ENCODE measurements at regions of chr1 and their contacts with region 1.

Region 1: DNA sequence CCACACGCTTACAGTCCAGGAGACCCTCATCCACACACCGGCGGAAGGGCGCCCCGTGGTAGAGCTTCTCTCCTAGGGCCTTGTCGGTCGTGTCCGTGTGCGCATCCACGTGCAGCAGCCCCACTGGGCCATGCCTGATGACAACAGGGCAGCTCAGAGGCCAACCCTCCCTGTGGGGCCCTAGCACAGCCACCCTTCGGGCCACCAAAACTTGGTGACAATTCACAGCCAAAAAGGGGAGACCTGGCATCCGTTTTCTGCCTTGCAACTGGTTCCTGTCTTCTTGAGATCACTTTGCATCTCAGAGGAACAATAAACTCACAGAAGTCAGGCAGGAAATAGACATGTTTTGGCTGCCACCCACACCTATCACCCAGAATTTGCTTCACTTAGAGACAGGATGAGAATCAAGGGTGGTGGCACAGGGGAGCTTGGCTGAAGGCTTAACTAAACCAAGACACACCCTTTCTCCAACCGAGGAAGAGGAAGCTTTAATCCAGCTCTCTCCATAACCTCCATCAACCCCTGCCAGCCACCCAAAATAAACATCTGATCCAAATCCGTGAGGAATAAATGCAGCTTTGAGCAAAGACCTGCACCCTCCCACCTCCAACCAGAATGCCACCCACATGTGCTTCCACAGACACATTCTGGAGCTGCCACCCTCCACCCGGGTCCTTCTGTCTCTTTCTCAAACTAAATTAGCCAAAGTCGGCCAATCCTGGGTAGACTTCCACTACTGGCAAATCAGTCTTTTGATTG is 5.7 kb downstream of the AGMAT start:
- DNase-seq: peak; percentile 50
- ATAC-seq: peak; percentile 85
- H3K4me3 Mint-ChIP-seq: peak overlapping the region; percentile 66
- H3K27ac Mint-ChIP-seq: peak overlapping the region; percentile 98
- H3K4me1 Mint-ChIP-seq: peaks cover 32% of the 10 kb centered on the region
- H3K27me3 Mint-ChIP-seq: no peaks in the 10 kb centered on the region

Region 2: GRCh38 chr1:15526490-15527339 is 52.4 kb before region 1 on chr1 and contains the start of gene DNAJC16:
- POLR2A ChIA-PET with region 1: interaction called, 13 read pairs
- DNase-seq: peak; percentile 93
- ATAC-seq: peak; percentile 65
- H3K4me3 Mint-ChIP-seq: peak within 1 kb of the TSS; percentile 93
- H3K27ac Mint-ChIP-seq: peak within 1 kb of the TSS; percentile 100
- H3K4me1 Mint-ChIP-seq: peaks cover 38% of the 10 kb centered on the region
- H3K27me3 Mint-ChIP-seq: no peaks in the 10 kb centered on the region
- total RNA-seq, gene DNAJC16: 15.7 to 18.9 TPM

Region 3: DNA sequence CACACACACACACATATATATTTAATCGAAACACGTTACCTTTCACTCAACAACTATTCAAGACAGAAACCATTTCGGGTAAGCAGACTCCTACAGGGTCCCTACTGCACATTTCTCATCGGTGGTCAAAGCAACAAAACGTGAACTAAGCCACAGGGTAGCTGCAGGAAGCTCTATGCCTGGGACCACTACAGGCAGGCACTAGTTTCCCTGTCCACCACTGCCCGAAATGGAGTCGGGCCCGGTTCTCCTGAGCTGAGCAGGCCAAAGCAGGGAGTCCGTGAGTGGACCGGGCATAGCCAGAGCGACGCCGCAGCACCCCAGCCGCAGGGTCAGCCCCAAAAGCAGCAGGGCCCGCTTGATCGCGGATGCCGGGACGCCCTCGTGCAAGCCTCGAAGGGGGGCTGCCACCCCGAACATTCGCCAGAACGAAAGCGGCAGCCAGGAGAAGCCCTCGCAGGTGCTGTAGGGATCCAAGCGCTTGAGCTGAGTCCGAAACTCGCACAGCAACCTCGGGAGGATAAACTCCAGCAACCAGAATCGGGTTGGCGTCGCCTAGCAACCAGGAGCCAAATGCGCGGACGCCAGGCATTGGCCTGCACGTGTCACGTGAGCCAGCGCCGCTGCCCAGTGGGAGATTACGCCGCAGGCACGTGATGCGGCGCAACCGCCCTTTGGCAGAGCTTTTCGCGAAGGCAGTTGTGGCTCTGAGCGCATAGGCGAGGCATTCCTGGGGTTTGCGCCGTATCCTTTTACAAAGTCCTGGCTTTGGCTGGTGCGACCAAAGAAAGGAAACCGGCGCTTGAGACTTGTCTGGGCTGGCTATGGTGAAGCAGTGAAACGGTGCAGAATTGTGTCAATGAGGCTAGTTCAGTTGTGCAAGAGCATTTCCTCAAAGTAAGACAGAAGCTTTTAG is 24.2 kb after region 1 on chr1:
- POLR2A ChIA-PET with region 1: interaction called, 13 read pairs
- DNase-seq: peak; percentile 93
- ATAC-seq: peak; percentile 96
- H3K4me3 Mint-ChIP-seq: peak overlapping the region; percentile 53
- H3K27ac Mint-ChIP-seq: peak overlapping the region; percentile 70
- H3K4me1 Mint-ChIP-seq: peaks cover 9% of the 10 kb centered on the region
- H3K27me3 Mint-ChIP-seq: no peaks in the 10 kb centered on the region

Region 4: GRCh38 chr1:15617175-15617880 is 38.2 kb after region 1 on chr1 and contains the start of gene DDI2:
- POLR2A ChIA-PET with region 1: interaction called, 11 read pairs
- DNase-seq: peak; percentile 97
- ATAC-seq: peak; percentile 91
- H3K4me3 Mint-ChIP-seq: peak within 1 kb of the TSS; percentile 93
- H3K27ac Mint-ChIP-seq: peak within 1 kb of the TSS; percentile 90
- H3K4me1 Mint-ChIP-seq: peaks cover 24% of the 10 kb centered on the region
- H3K27me3 Mint-ChIP-seq: no peaks in the 10 kb centered on the region
- total RNA-seq, gene DDI2: 31.6 to 33.3 TPM

Measured in activated naive CD8-positive, alpha-beta T cell treated with anti-CD3 and anti-CD28 coated beads, Interleukin-2, amount 10 ng/mL, durations not matched to agents 7 days and 5 days (primary cell).